ENCODE measurements at regions of chr6 and their contacts with region 1.

Region 1: GRCh38 chr6:127855542-127856159 is 45.2 kb downstream of the THEMIS start:
- DNase-seq: no peak
- H3K4me3 Mint-ChIP-seq: no peak overlapping the region
- H3K27ac Mint-ChIP-seq: peak overlapping the region; percentile 14
- H3K4me1 Mint-ChIP-seq: peaks cover 48% of the 10 kb centered on the region
- H3K27me3 Mint-ChIP-seq: no peaks in the 10 kb centered on the region

Region 2: DNA sequence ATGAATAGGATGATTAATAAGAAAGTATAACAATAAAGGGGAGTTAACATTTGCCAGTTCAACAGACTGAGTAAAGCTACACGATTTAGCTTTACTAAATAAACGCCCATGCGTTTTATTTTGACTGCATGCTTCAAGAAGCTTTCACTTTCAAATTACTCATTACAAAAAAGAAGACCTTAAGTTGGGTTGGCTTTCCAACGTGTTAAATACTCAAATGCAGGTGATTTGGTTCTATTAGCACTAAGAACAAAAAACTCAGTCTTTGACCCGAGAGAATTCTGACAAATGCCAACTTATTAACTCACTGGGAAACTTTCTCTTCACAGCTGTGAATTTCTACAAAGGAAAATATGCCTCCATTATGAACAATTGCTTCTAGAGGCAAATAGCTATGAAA is 564.2 kb before region 1 on chr6:
- intact Hi-C with region 1: no loop called
- DNase-seq: no peak
- H3K4me3 Mint-ChIP-seq: peak overlapping the region; percentile 8
- H3K27ac Mint-ChIP-seq: peak overlapping the region; percentile 77
- H3K4me1 Mint-ChIP-seq: peaks cover 32% of the 10 kb centered on the region
- H3K27me3 Mint-ChIP-seq: no peaks in the 10 kb centered on the region

Region 3: DNA sequence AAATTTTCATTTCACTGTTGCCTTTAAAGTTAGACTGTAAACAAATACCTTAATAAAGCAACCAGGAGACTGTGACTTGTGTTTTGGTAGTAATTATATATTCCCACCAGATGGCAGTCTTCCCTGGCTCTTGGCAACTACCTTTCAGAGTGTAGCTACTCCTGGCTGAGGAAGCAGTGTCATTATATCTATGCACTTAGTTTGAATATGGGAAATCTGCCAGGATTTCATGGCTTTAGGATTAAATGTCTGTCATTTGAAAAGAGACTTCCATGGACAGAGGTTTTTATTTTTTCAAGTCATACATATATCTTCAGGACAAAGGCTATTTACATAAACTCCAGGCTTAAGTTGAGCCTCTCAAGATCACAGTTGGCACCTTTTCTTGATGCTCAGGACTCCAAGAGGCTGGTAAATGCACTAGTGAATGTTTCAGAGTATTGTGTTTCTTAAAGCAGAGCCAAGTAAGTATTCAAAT is 118.6 kb before region 1 on chr6:
- intact Hi-C with region 1: loop called (anchors 2 kb)
- DNase-seq: peak; percentile 4
- H3K4me3 Mint-ChIP-seq: no peak overlapping the region
- H3K27ac Mint-ChIP-seq: peak overlapping the region; percentile 29
- H3K4me1 Mint-ChIP-seq: peaks cover 15% of the 10 kb centered on the region
- H3K27me3 Mint-ChIP-seq: no peaks in the 10 kb centered on the region

Region 4: GRCh38 chr6:127992144-127992543 is 136.5 kb after region 1 on chr6:
- intact Hi-C with region 1: no loop called
- DNase-seq: no peak
- H3K4me3 Mint-ChIP-seq: no peak overlapping the region
- H3K27ac Mint-ChIP-seq: no peak overlapping the region
- H3K4me1 Mint-ChIP-seq: peaks cover 18% of the 10 kb centered on the region
- H3K27me3 Mint-ChIP-seq: no peaks in the 10 kb centered on the region

Region 5: DNA sequence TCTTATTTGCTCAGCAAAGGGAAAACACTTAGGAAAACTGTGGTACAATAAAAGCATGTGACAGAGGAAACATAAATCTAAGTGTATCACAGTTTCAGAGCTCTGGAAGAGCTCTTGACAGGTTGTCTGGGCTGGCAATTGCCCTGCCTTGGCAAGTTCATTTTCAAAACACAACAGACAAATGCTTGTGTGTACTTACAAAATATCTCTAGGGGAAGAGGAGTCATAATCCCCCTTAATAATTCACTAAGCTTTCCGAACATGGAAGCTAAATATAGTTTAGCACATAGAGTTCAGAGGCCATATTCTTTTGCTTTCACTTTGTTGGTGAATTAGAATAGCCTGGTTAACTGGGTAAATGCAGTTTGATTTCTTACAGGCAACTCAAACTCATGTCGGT is 256.8 kb after region 1 on chr6:
- intact Hi-C with region 1: loop called (anchors 10 kb)
- DNase-seq: no peak
- H3K4me3 Mint-ChIP-seq: peak overlapping the region; percentile 35
- H3K27ac Mint-ChIP-seq: no peak overlapping the region
- H3K4me1 Mint-ChIP-seq: peaks cover 17% of the 10 kb centered on the region
- H3K27me3 Mint-ChIP-seq: no peaks in the 10 kb centered on the region

Region 6: DNA sequence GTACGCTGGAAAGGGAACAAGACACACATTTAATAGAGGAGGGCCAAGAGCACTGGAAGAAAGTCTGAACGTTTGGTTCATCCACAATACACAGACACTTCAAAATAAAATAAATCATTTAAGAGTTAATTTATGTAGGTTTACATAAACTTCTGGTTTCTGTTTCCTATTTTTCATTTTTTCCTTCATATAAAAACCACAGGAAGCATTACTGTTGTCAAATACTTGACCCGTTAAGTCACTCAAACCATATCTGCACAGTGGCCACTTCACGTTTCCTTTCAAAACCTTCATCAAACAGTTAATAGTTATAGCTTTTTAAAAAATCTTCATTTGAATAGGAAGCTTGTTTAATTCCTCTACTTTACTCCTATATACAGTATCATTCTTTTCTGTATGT is 302.8 kb after region 1 on chr6:
- intact Hi-C with region 1: loop called (anchors 10 kb)
- DNase-seq: no peak
- H3K4me3 Mint-ChIP-seq: no peak overlapping the region
- H3K27ac Mint-ChIP-seq: no peak overlapping the region
- H3K4me1 Mint-ChIP-seq: no peaks in the 10 kb centered on the region
- H3K27me3 Mint-ChIP-seq: peaks cover 5% of the 10 kb centered on the region

Region 7: GRCh38 chr6:128179876-128180438 is 324.3 kb after region 1 on chr6:
- intact Hi-C with region 1: loop called (anchors 5 kb)
- DNase-seq: no peak
- H3K4me3 Mint-ChIP-seq: no peak overlapping the region
- H3K27ac Mint-ChIP-seq: no peak overlapping the region
- H3K4me1 Mint-ChIP-seq: peaks cover 5% of the 10 kb centered on the region
- H3K27me3 Mint-ChIP-seq: no peaks in the 10 kb centered on the region

Region 8: GRCh38 chr6:128259730-128260685 is 404.4 kb after region 1 on chr6:
- intact Hi-C with region 1: loop called (anchors 5 kb)
- DNase-seq: no peak
- H3K4me3 Mint-ChIP-seq: peak overlapping the region; percentile 25
- H3K27ac Mint-ChIP-seq: no peak overlapping the region
- H3K4me1 Mint-ChIP-seq: peaks cover 30% of the 10 kb centered on the region
- H3K27me3 Mint-ChIP-seq: no peaks in the 10 kb centered on the region

Region 9: GRCh38 chr6:128327890-128328289 is 472.2 kb after region 1 on chr6:
- intact Hi-C with region 1: loop called (anchors 1 kb)
- DNase-seq: peak; percentile 22
- H3K4me3 Mint-ChIP-seq: no peak overlapping the region
- H3K27ac Mint-ChIP-seq: no peak overlapping the region
- H3K4me1 Mint-ChIP-seq: no peaks in the 10 kb centered on the region
- H3K27me3 Mint-ChIP-seq: peaks cover 7% of the 10 kb centered on the region